ENCODE measurements at regions of chr2 and their contacts with region 1.

Region 1: GRCh38 chr2:161954103-161954502 is 119.9 kb downstream of the DPP4 start:
- DNase-seq: peak; percentile 18
- H3K4me3 Mint-ChIP-seq: no peak overlapping the region
- H3K27ac Mint-ChIP-seq: peak overlapping the region; percentile 88
- H3K4me1 Mint-ChIP-seq: peaks cover 53% of the 10 kb centered on the region
- H3K27me3 Mint-ChIP-seq: no peaks in the 10 kb centered on the region

Region 2: GRCh38 chr2:161238560-161239325 is 715.4 kb before region 1 on chr2:
- CTCF ChIA-PET with region 1: no interaction called
- intact Hi-C with region 1: loop called (anchors 5 kb)
- DNase-seq: peak; percentile 71
- H3K4me3 Mint-ChIP-seq: peak overlapping the region; percentile 84
- H3K27ac Mint-ChIP-seq: peak overlapping the region; percentile 47
- H3K4me1 Mint-ChIP-seq: peaks cover 47% of the 10 kb centered on the region
- H3K27me3 Mint-ChIP-seq: no peaks in the 10 kb centered on the region

Region 3: GRCh38 chr2:161905389-161906046 is 48.6 kb before region 1 on chr2:
- CTCF ChIA-PET with region 1: no interaction called
- intact Hi-C with region 1: loop called (anchors 1 kb)
- DNase-seq: peak; percentile 50
- H3K4me3 Mint-ChIP-seq: no peak overlapping the region
- H3K27ac Mint-ChIP-seq: peak overlapping the region; percentile 57
- H3K4me1 Mint-ChIP-seq: peaks cover 6% of the 10 kb centered on the region
- H3K27me3 Mint-ChIP-seq: no peaks in the 10 kb centered on the region

Region 4: GRCh38 chr2:161981679-161982250 is 27.7 kb after region 1 on chr2:
- CTCF ChIA-PET with region 1: interaction called, 3 read pairs
- intact Hi-C with region 1: loop called (anchors 1 kb)
- DNase-seq: no peak
- H3K4me3 Mint-ChIP-seq: no peak overlapping the region
- H3K27ac Mint-ChIP-seq: no peak overlapping the region
- H3K4me1 Mint-ChIP-seq: peaks cover 24% of the 10 kb centered on the region
- H3K27me3 Mint-ChIP-seq: no peaks in the 10 kb centered on the region

Region 5: GRCh38 chr2:162025121-162026031 is 71.3 kb after region 1 on chr2:
- CTCF ChIA-PET with region 1: no interaction called
- intact Hi-C with region 1: loop called (anchors 1 kb)
- DNase-seq: peak; percentile 32
- H3K4me3 Mint-ChIP-seq: no peak overlapping the region
- H3K27ac Mint-ChIP-seq: no peak overlapping the region
- H3K4me1 Mint-ChIP-seq: peaks cover 63% of the 10 kb centered on the region
- H3K27me3 Mint-ChIP-seq: no peaks in the 10 kb centered on the region

Region 6: DNA sequence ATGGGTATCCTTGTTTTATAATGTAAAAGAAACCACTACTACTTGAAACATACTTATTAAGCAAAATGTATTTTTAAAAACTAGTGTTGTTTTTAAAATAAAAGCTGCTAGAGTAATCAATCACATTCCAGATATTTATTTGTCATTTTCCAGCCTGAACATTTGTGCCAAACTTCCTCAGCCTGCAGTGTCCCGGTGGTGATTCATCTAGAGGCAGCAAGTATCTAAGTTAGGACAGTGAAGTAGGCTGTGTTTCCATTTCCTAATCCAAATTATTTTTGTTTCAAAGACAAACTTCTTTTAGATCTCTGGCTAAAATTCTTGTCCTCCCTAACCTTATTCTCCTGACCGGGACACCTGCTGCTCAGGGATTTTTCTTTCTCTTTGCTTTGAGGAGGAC is 210.7 kb after region 1 on chr2:
- CTCF ChIA-PET with region 1: no interaction called
- intact Hi-C with region 1: no loop called
- DNase-seq: no peak
- H3K4me3 Mint-ChIP-seq: no peak overlapping the region
- H3K27ac Mint-ChIP-seq: no peak overlapping the region
- H3K4me1 Mint-ChIP-seq: peaks cover 8% of the 10 kb centered on the region
- H3K27me3 Mint-ChIP-seq: peaks cover 11% of the 10 kb centered on the region

Region 7: DNA sequence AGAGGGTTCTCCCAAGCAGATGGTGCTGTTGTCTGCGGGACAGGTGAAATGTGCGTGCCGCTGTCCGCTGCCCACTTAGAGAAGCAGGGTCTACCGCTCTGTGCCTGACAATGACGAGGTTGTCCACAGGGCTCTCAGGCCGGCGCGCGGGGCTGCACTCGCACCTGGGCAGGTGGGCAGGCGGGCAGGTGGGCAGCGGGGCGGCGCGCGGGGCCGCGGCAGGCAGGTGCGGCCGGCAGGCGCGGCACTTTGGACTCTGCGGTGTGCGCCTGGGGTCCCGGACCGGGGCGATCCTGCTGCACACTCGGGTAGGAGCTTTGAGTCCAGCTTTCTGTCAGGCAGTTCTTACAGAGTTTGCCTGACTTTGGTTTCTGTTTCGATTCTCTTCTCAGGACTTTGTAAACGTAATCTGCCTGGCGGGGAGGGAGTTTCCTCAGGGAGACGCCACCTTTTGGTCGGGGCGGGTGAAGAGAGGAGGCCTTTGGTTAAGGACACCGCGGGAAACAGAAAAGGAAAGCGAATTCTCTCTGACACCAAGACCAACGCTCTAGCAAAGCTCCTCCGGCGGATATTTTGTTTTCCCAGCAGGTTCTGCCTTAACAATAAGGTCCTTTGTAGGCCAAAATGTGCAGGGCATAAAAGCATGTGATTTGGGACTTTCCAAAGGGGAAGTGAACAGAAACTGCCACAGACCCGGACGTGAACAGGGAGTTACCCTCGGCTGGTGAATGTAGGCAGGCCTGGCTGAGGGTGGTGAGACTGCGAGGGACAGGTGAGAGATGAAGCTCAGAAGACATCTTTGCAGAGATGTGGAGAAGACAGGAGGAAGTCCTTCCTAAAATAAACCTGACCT is 364.5 kb after region 1 on chr2 and contains the start of gene IFIH1:
- CTCF ChIA-PET with region 1: no interaction called
- intact Hi-C with region 1: loop called (anchors 2 kb)
- DNase-seq: peak; percentile 88
- H3K4me3 Mint-ChIP-seq: peak within 1 kb of the TSS; percentile 94
- H3K27ac Mint-ChIP-seq: peak within 1 kb of the TSS; percentile 98
- H3K4me1 Mint-ChIP-seq: peaks cover 52% of the 10 kb centered on the region
- H3K27me3 Mint-ChIP-seq: no peaks in the 10 kb centered on the region
- total RNA-seq, gene IFIH1: 33.8 to 34.6 TPM